Calu3 (cell line): ENCODE measurements at regions of chr1 and their contacts with region 1.

Region 1: GRCh38 chr1:229227298-229227919 is 43.5 kb upstream of the RAB4A start:
- DNase-seq: peak; percentile 92
- H3K4me3 Mint-ChIP-seq: no peak overlapping the region
- H3K27ac Mint-ChIP-seq: peak overlapping the region; percentile 33
- H3K4me1 Mint-ChIP-seq: peaks cover 69% of the 10 kb centered on the region
- H3K27me3 Mint-ChIP-seq: no peaks in the 10 kb centered on the region
- CTCF ChIP-seq: peak; percentile 92

Region 2: DNA sequence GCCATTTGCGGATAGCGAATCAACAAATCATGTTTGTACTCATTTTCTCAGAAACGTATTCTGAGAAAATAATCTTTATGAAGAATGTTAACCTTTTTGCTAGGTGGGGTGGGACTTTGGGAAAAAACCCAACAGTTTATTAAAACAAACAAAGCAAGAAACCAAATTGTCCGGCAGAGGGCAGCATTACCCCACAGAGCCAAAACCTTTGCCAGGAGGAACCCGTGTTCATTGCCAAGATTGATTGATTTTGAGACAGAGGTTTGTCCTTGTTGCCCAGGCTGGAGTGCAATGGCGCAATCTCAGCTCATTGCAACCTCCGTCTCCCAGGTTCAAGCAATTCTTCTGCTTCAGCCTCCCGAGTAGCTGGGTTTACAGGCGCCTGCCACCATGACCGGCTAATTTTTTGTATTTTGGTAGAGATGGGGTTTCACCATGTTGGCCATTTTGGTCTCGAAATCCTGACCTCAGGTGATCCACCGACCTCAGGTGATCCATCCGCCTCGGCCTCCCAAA is 563.0 kb before region 1 on chr1:
- CTCF ChIA-PET with region 1: interaction called, 10 read pairs
- intact Hi-C with region 1: no loop called
- DNase-seq: peak; percentile 88
- H3K4me3 Mint-ChIP-seq: peak overlapping the region; percentile 23
- H3K27ac Mint-ChIP-seq: no peak overlapping the region
- H3K4me1 Mint-ChIP-seq: peaks cover 40% of the 10 kb centered on the region
- H3K27me3 Mint-ChIP-seq: no peaks in the 10 kb centered on the region
- CTCF ChIP-seq: peak; percentile 79

Region 3: DNA sequence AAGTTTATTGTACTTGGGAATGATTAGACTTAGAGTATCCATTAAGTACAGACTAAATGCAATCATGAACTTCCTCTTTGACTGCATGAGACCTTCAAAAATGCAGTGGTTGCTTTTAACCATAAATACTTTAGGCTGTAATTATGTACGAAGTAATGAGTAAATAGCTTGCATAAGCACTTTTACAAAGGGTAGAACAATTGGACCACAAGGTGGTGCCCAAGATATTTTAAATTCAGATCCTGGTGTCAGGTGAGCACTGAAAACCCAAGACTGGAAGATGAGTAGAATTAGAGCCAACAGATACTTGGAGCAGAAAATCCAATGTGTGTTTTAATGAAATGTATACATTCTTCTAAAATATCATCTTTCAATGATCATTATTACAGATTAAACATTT is 535.5 kb before region 1 on chr1:
- CTCF ChIA-PET with region 1: interaction called, 11 read pairs
- intact Hi-C with region 1: loop called (anchors 2 kb)
- DNase-seq: peak; percentile 58
- H3K4me3 Mint-ChIP-seq: no peak overlapping the region
- H3K27ac Mint-ChIP-seq: no peak overlapping the region
- H3K4me1 Mint-ChIP-seq: peaks cover 11% of the 10 kb centered on the region
- H3K27me3 Mint-ChIP-seq: peaks cover 15% of the 10 kb centered on the region
- CTCF ChIP-seq: peak; percentile 58

Region 4: GRCh38 chr1:228830954-228831481 is 396.4 kb before region 1 on chr1:
- CTCF ChIA-PET with region 1: no interaction called
- intact Hi-C with region 1: loop called (anchors 5 kb)
- DNase-seq: peak; percentile 63
- H3K4me3 Mint-ChIP-seq: no peak overlapping the region
- H3K27ac Mint-ChIP-seq: peak overlapping the region; percentile 72
- H3K4me1 Mint-ChIP-seq: peaks cover 60% of the 10 kb centered on the region
- H3K27me3 Mint-ChIP-seq: no peaks in the 10 kb centered on the region
- CTCF ChIP-seq: no peak

Region 5: GRCh38 chr1:228944935-228945371 is 282.5 kb before region 1 on chr1:
- CTCF ChIA-PET with region 1: no interaction called
- intact Hi-C with region 1: loop called (anchors 10 kb)
- DNase-seq: no peak
- H3K4me3 Mint-ChIP-seq: no peak overlapping the region
- H3K27ac Mint-ChIP-seq: no peak overlapping the region
- H3K4me1 Mint-ChIP-seq: peaks cover 30% of the 10 kb centered on the region
- H3K27me3 Mint-ChIP-seq: no peaks in the 10 kb centered on the region
- CTCF ChIP-seq: no peak

Region 6: GRCh38 chr1:229124520-229125124 is 102.8 kb before region 1 on chr1:
- CTCF ChIA-PET with region 1: interaction called, 3 read pairs
- intact Hi-C with region 1: loop called (anchors 2 kb)
- DNase-seq: peak; percentile 70
- H3K4me3 Mint-ChIP-seq: no peak overlapping the region
- H3K27ac Mint-ChIP-seq: peak overlapping the region; percentile 70
- H3K4me1 Mint-ChIP-seq: peaks cover 62% of the 10 kb centered on the region
- H3K27me3 Mint-ChIP-seq: no peaks in the 10 kb centered on the region
- CTCF ChIP-seq: no peak

Region 7: GRCh38 chr1:229579059-229579673 is 351.8 kb after region 1 on chr1:
- CTCF ChIA-PET with region 1: no interaction called
- intact Hi-C with region 1: no loop called
- DNase-seq: no peak
- H3K4me3 Mint-ChIP-seq: no peak overlapping the region
- H3K27ac Mint-ChIP-seq: no peak overlapping the region
- H3K4me1 Mint-ChIP-seq: peaks cover 12% of the 10 kb centered on the region
- H3K27me3 Mint-ChIP-seq: no peaks in the 10 kb centered on the region
- CTCF ChIP-seq: no peak